Ascending aorta (tissue), 2 donors: ENCODE measurements at regions of chr1 and their contacts with region 1.

Region 1: GRCh38 chr1:111592389-111593361 is 26.9 kb upstream of the RAP1A start:
- DNase-seq: peak; percentile 87 to 97
- H3K4me3 ChIP-seq: peak overlapping the region; percentile 27 to 39
- H3K27ac ChIP-seq: peak overlapping the region; percentile 74 to 75
- H3K4me1 ChIP-seq: peaks cover 5 to 21% of the 10 kb centered on the region in 2 donors
- H3K27me3 ChIP-seq: no peaks in the 10 kb centered on the region
- CTCF ChIP-seq: no peak

Region 2: DNA sequence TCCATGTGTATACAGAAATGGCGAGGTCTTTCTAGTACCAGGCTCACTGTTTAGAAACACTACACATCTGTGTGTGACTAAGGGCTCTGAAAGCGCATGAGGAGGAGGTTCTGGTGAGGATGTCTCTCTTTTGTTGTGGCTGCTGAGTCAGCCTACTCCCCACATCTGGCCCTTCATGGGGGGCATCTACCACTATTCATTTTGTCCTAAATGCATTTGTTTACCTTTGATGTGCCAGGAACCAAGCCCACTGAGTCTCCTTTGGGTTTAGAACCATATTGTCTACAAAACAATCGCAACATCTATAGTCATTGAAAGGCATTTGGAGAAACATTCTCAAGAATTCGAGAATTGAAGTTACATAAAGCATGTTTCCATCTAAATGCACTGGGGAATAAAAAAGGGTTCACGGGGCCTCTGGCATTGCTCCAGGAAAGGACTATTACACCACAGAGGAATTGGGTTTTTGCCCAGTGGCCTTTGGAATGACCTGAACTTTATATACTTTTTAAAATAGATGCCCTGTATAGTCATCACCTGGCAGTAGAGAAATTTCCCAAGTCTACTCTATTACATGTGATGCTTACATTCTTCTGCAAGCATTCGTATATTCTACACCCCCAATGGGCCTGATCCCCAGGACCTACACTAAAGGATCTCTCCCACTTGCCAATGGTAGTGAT is 54.2 kb before region 1 on chr1:
- intact Hi-C with region 1: loop called (anchors 1 kb)
- DNase-seq: no peak
- H3K4me3 ChIP-seq: no peak overlapping the region
- H3K27ac ChIP-seq: no peak overlapping the region
- H3K4me1 ChIP-seq: peaks cover 0 to 21% of the 10 kb centered on the region in 2 donors
- H3K27me3 ChIP-seq: no peaks in the 10 kb centered on the region
- CTCF ChIP-seq: no peak

Region 3: GRCh38 chr1:111739194-111739924 is 146.7 kb after region 1 on chr1 and contains the start of gene INKA2:
- intact Hi-C with region 1: loop called (anchors 5 kb)
- DNase-seq: peak; percentile 77 to 93
- H3K4me3 ChIP-seq: peak within 1 kb of the TSS; percentile 78 to 88
- H3K27ac ChIP-seq: peak within 1 kb of the TSS; percentile 95
- H3K4me1 ChIP-seq: peaks cover 0 to 14% of the 10 kb centered on the region in 2 donors
- H3K27me3 ChIP-seq: no peaks in the 10 kb centered on the region
- CTCF ChIP-seq: peak in 1 of 3 experiments; percentile 25
- total RNA-seq, gene INKA2: not detected